ENCODE measurements at regions of chr21 and their contacts with region 1.

Region 1: DNA sequence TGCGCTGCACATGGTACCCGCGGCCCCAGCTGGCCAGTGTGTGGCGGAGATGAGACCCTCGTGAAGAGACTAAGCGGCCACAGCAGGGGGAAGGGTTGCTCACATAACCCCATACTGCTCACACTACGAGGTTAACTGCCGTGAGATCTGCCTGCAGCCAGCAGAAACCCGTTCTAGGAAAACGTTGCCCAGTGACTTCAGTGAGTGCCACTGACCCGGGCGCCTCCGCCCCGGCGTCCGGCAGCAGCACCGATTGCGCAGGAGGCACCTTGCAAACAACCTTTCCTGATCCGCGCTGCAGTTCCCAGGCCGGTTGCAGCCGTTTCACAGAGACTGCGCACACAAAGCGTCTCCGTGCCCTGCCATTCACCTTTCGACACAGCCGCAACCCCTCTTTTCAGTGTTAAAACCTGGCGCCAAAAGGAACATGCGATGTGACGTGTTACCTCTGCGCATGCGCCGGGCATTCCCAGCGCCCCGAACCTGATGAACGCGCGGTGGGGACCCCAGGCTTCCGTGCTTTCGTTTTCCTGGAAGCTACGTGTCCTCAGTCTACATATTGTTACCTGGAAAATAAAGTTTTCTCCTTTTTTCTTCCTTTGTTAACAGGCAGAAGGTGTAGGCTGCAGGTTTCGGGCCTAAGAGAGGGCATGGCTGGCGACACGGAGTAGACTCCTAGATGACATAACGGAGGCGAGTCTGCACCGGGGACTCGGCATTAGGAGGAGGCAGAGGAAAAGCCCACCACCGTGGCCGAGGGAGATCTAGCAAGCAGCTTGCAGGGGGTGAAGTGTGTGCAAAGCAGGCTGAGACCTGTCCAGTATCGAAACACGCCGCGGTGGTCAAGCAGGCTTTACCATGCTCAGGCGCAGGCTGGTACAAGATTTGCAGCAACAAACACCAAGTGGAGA is 8.9 kb downstream of the VPS26C start:
- DNase-seq: peak; percentile 52 to 73
- ATAC-seq: peak; percentile 72 to 82 (median 75)
- H3K4me3 ChIP-seq: peak overlapping the region; percentile 73
- H3K27ac ChIP-seq: peak overlapping the region; percentile 73
- H3K4me1 ChIP-seq: peaks cover 28% of the 10 kb centered on the region
- H3K27me3 ChIP-seq: no peaks in the 10 kb centered on the region
- CTCF ChIP-seq: no peak

Region 2: DNA sequence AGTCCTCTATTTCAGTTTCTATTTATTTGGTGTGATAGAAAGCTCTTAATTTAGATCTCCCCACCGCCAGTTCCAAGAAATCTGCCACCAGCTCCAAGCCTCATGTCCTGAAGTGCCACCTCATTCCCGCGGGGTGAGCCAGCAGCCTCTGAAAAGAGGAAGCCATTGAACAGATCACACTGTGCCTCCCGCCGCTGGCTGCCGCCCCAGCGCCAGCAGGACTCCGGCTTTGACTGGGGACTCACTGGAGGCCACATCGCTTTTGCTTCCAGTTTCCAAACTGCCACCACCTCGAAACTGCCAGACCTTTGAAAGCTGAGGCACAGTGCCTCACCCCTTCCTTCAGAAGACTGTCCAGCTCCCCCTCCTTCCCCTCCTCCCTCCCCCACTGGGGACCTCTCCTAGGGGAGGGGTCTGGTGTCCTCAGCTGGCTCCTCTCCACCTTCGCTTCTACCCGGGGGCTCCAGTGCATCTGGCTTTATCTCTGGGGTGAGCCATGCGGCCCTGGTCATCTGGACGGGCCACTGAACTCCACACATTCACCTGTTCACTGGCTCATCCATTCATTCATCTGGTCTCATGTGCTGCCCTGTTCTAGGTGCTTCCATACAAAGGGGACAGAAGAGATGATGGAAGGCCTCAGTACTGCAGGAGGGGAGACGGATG is 50.0 kb before region 1 on chr21:
- intact Hi-C with region 1: no loop called
- DNase-seq: peak; percentile 80 to 92
- ATAC-seq: peak; percentile 82 to 91 (median 84)
- H3K4me3 ChIP-seq: peak overlapping the region; percentile 58
- H3K27ac ChIP-seq: peak overlapping the region; percentile 94
- H3K4me1 ChIP-seq: peaks cover 13% of the 10 kb centered on the region
- H3K27me3 ChIP-seq: no peaks in the 10 kb centered on the region
- CTCF ChIP-seq: no peak

Region 3: GRCh38 chr21:37220981-37221664 is 37.1 kb before region 1 on chr21:
- intact Hi-C with region 1: loop called in 1 of 2 experiments (anchors 5 kb)
- DNase-seq: peak; percentile 95 to 97
- ATAC-seq: peak; percentile 93 to 97 (median 94)
- H3K4me3 ChIP-seq: peak overlapping the region; percentile 78
- H3K27ac ChIP-seq: peak overlapping the region; percentile 83
- H3K4me1 ChIP-seq: peaks cover 8% of the 10 kb centered on the region
- H3K27me3 ChIP-seq: no peaks in the 10 kb centered on the region
- CTCF ChIP-seq: no peak

Region 4: DNA sequence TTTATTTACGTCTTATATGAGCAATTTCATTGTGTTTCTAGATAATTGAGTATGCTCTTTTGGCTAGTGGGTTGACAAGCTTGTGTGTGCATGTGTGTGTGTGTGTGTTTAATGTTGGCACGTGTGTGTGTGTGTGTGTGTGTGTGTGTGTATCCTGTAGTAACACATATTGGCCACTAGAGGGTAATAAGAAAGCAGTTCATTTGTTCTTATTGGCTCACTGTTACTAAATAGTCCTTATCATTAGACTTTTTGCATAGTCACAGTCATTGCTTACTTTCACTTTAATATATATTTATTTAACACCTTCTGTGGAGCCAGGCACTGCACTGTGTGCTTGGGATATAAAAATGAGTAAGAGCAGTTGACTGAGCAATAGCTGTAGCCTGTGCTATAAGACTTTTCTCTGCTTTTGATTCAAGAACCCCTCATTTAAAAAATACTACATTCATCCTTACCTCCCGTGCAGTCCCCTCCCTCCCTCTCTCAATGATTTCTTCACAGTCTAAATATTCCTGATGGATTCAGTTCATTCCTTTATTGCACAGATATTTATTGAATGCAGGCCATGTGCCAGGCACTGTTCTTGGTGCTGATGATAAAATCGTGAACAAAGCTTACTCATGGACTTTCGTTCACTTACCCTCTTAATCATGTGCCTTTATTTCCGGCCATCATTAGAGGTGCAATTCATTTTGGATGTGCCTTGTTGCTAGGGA is 205.0 kb after region 1 on chr21:
- intact Hi-C with region 1: loop called in 1 of 2 experiments (anchors 10 kb)
- DNase-seq: no peak
- ATAC-seq: peak; percentile 53 to 62 (median 58)
- H3K4me3 ChIP-seq: peak overlapping the region; percentile 30
- H3K27ac ChIP-seq: peak overlapping the region; percentile 61
- H3K4me1 ChIP-seq: peaks cover 64% of the 10 kb centered on the region
- H3K27me3 ChIP-seq: no peaks in the 10 kb centered on the region
- CTCF ChIP-seq: peak; percentile 52

Region 5: DNA sequence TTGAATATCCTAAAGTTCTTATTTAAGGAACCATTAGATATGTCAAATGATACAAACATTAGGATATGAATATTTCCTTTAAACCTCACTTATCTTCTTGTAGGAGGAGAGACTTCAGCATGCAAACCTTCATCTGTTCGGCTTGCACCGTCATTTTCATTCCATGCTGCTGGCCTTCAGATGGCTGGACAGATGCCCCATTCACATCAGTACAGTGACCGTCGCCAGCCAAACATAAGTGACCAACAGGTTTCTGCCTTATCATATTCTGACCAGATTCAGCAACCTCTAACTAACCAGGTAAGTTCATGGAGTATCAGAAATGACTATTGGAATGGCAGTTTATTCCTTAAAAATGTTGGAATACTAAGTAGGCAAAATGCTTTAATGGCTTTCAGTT is 214.4 kb after region 1 on chr21:
- intact Hi-C with region 1: loop called (anchors 5 to 10 kb)
- DNase-seq: no peak
- ATAC-seq: peak in 3 of 4 donors; percentile 43 to 67 (median 62)
- H3K4me3 ChIP-seq: no peak overlapping the region
- H3K27ac ChIP-seq: peak overlapping the region; percentile 34
- H3K4me1 ChIP-seq: peaks cover 72% of the 10 kb centered on the region
- H3K27me3 ChIP-seq: no peaks in the 10 kb centered on the region
- CTCF ChIP-seq: no peak